CD8-positive, alpha-beta T cell (primary cell): ENCODE measurements at regions of chr5 and their contacts with region 1.

Region 1: DNA sequence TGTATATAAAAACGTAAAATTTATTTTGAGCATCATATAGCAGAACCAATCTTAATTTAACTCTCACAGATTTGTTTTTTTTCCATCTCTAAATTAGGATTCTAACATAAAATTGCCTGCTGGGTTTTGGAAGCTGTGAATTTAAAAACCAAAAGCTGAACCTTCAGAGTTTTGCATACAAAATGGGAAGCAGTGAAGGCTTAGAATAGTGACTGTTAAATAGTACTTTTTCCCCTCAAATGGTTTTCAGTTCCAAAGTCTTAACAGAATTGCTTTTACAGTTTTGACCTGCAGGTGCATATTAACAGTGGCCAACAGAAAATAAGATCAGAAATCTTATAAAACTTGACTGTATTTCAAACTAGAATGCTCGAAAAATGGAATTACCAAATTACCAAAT is 55.1 kb upstream of the LVRN start:
- DNase-seq: no peak
- ATAC-seq: no peak
- H3K4me3 ChIP-seq: no peak overlapping the region
- H3K4me3 Mint-ChIP-seq: no peak overlapping the region
- H3K27ac ChIP-seq: no peak overlapping the region
- H3K27ac Mint-ChIP-seq: no peak overlapping the region
- H3K4me1 ChIP-seq: no peaks in the 10 kb centered on the region
- H3K4me1 Mint-ChIP-seq: no peaks in the 10 kb centered on the region
- H3K27me3 ChIP-seq: no peaks in the 10 kb centered on the region
- H3K27me3 Mint-ChIP-seq: no peaks in the 10 kb centered on the region
- CTCF ChIP-seq: no peak

Region 2: DNA sequence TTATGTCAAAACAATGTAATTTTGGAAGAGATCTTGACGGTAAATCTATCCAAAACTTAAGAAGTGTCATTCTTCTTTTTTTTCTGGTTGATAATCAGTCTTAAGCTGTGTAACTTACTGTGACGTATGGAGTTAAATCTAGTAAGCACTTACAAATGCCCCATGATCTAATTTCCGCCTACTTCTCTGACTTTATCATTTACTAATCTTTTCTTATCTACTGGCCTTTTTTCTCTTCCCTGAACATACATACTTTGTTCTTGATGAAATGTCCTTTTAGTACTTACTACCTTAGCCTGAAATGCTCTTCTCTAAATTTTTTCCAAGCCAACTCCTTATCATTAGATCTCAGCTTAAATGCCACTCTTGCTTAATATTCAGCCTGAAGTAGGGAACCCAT is 37.9 kb before region 1 on chr5:
- CTCF ChIA-PET with region 1: no interaction called
- POLR2A ChIA-PET with region 1: interaction called, 3 read pairs
- intact Hi-C with region 1: loop called in 1 of 2 experiments (anchors 1 kb)
- DNase-seq: no peak
- ATAC-seq: no peak
- H3K4me3 ChIP-seq: no peak overlapping the region
- H3K4me3 Mint-ChIP-seq: no peak overlapping the region
- H3K27ac ChIP-seq: no peak overlapping the region
- H3K27ac Mint-ChIP-seq: no peak overlapping the region
- H3K4me1 ChIP-seq: no peaks in the 10 kb centered on the region
- H3K4me1 Mint-ChIP-seq: peaks cover 3% of the 10 kb centered on the region
- H3K27me3 ChIP-seq: no peaks in the 10 kb centered on the region
- H3K27me3 Mint-ChIP-seq: no peaks in the 10 kb centered on the region
- CTCF ChIP-seq: no peak

Region 3: GRCh38 chr5:115930626-115931337 is 23.6 kb after region 1 on chr5:
- CTCF ChIA-PET with region 1: no interaction called
- POLR2A ChIA-PET with region 1: no interaction called
- intact Hi-C with region 1: loop called in 1 of 2 experiments (anchors 1 kb)
- DNase-seq: no peak
- ATAC-seq: no peak
- H3K4me3 ChIP-seq: no peak overlapping the region
- H3K4me3 Mint-ChIP-seq: no peak overlapping the region
- H3K27ac ChIP-seq: no peak overlapping the region
- H3K27ac Mint-ChIP-seq: no peak overlapping the region
- H3K4me1 ChIP-seq: no peaks in the 10 kb centered on the region
- H3K4me1 Mint-ChIP-seq: no peaks in the 10 kb centered on the region
- H3K27me3 ChIP-seq: no peaks in the 10 kb centered on the region
- H3K27me3 Mint-ChIP-seq: no peaks in the 10 kb centered on the region
- CTCF ChIP-seq: no peak

Region 4: GRCh38 chr5:115962503-115963402 is 55.6 kb after region 1 on chr5:
- CTCF ChIA-PET with region 1: no interaction called
- POLR2A ChIA-PET with region 1: no interaction called
- intact Hi-C with region 1: no loop called
- DNase-seq: no peak
- ATAC-seq: no peak
- H3K4me3 ChIP-seq: no peak overlapping the region
- H3K4me3 Mint-ChIP-seq: peak overlapping the region; percentile 15
- H3K27ac ChIP-seq: no peak overlapping the region
- H3K27ac Mint-ChIP-seq: no peak overlapping the region
- H3K4me1 ChIP-seq: peaks cover 14% of the 10 kb centered on the region
- H3K4me1 Mint-ChIP-seq: peaks cover 13% of the 10 kb centered on the region
- H3K27me3 ChIP-seq: peaks cover 18 to 30% of the 10 kb centered on the region in 2 experiments
- H3K27me3 Mint-ChIP-seq: peaks cover 48% of the 10 kb centered on the region
- CTCF ChIP-seq: no peak